H1 (cell line): ENCODE measurements at regions of chr17 and their contacts with region 1.

Region 1: GRCh38 chr17:37358830-37359681 is 16.7 kb upstream of the C17orf78 start:
- DNase-seq: peak; percentile 96
- H3K4me3 ChIP-seq: peak overlapping the region; percentile 83 to 95 (median 88)
- H3K27ac ChIP-seq: peak overlapping the region; percentile 69
- H3K4me1 ChIP-seq: peaks cover 0 to 12% (median 7%) of the 10 kb centered on the region in 4 experiments; a peak in 6 of 7 replicates
- H3K27me3 ChIP-seq: no peaks in the 10 kb centered on the region
- CTCF ChIP-seq: peak in 2 of 3 experiments; percentile 32 to 34; a peak in 2 of 4 replicates
- EP300 ChIP-seq: no peak
- POLR2A ChIP-seq: peak in 1 of 2 experiments; percentile 64; a peak in 1 of 3 replicates
- RAD21 ChIP-seq: peak in 1 of 2 experiments; percentile 21; a peak in 2 of 4 replicates

Region 2: DNA sequence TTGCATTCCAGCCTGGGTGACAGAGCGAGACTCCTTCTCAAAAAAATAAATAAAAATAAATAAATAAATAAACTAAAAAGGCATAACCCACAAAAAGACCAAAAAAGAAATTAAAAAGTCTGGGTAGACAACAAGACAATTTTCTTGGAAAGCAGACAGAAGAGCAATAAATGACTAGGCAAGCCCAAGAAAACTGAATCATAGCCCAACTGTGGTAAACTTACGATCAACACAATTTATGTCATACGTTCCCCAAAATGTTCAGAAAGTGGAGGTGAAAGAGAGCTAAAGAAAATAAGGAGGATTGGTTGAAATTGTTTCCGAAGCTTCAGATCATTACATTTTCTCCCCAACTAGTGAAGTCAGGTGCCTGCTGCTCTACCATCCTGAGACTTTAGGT is 14.5 kb before region 1 on chr17:
- CTCF ChIA-PET with region 1: interaction called, 3 read pairs
- POLR2A ChIA-PET with region 1: interaction called, 11 read pairs
- DNase-seq: no peak
- H3K4me3 ChIP-seq: no peak overlapping the region
- H3K27ac ChIP-seq: no peak overlapping the region
- H3K4me1 ChIP-seq: no peaks in the 10 kb centered on the region
- H3K27me3 ChIP-seq: no peaks in the 10 kb centered on the region
- CTCF ChIP-seq: no peak
- EP300 ChIP-seq: no peak
- POLR2A ChIP-seq: no peak
- RAD21 ChIP-seq: no peak